ENCODE measurements at regions of chr5 and their contacts with region 1.

Region 1: DNA sequence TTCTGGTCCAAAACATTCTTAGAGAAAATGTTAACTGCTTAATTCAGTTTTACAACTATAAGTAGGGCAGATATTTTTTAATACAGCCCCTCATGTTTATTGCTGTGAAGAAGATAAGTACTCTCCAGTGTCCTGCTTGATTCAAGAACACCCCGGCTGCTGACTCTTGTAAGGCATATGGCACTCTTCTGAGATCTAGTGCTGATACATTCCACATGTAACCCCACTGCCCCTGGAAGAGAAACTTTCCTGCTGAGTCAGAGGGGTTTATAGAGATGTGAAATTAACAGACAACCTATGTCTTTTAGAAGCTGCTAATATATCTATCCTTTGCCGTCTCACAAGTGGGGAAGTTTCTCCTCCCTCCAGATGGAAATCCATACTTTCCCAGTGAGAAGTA is 1.0 kb upstream of the MINAR2 start:
- DNase-seq: no peak
- H3K4me3 ChIP-seq: no peak overlapping the region
- H3K27ac ChIP-seq: no peak overlapping the region
- H3K4me1 ChIP-seq: peaks cover 0 to 3% (median 0%) of the 10 kb centered on the region in 4 experiments; a peak in 2 of 7 replicates
- H3K27me3 ChIP-seq: no peaks in the 10 kb centered on the region
- CTCF ChIP-seq: no peak
- EP300 ChIP-seq: no peak
- POLR2A ChIP-seq: no peak
- RAD21 ChIP-seq: no peak

Region 2: GRCh38 chr5:129760636-129761505 is 14.0 kb after region 1 on chr5:
- CTCF ChIA-PET with region 1: interaction called, 11 read pairs
- POLR2A ChIA-PET with region 1: no interaction called
- DNase-seq: no peak
- H3K4me3 ChIP-seq: no peak overlapping the region
- H3K27ac ChIP-seq: no peak overlapping the region
- H3K4me1 ChIP-seq: 0 out of 7 replicates have a peak, but pooled peaks cover 0 to 3% (median 0%) of the 10 kb centered on the region in 4 experiments
- H3K27me3 ChIP-seq: no peaks in the 10 kb centered on the region
- CTCF ChIP-seq: no peak
- EP300 ChIP-seq: no peak
- POLR2A ChIP-seq: no peak
- RAD21 ChIP-seq: no peak

Region 3: GRCh38 chr5:129807162-129807814 is 60.4 kb after region 1 on chr5:
- CTCF ChIA-PET with region 1: no interaction called
- POLR2A ChIA-PET with region 1: no interaction called
- DNase-seq: no peak
- H3K4me3 ChIP-seq: no peak overlapping the region
- H3K27ac ChIP-seq: no peak overlapping the region
- H3K4me1 ChIP-seq: no peaks in the 10 kb centered on the region
- H3K27me3 ChIP-seq: no peaks in the 10 kb centered on the region
- CTCF ChIP-seq: no peak
- EP300 ChIP-seq: no peak
- POLR2A ChIP-seq: no peak
- RAD21 ChIP-seq: no peak